ENCODE measurements at regions of chr9 and their contacts with region 1.

Region 1: GRCh38 chr9:131799177-131799823 is 59.4 kb upstream of the RAPGEF1 start:
- DNase-seq: peak; percentile 22 to 70 (median 46)
- ATAC-seq: no peak
- H3K4me3 ChIP-seq: no peak overlapping the region
- H3K4me3 Mint-ChIP-seq: no peak overlapping the region
- H3K27ac ChIP-seq: no peak overlapping the region
- H3K27ac Mint-ChIP-seq: no peak overlapping the region
- H3K4me1 ChIP-seq: no peaks in the 10 kb centered on the region
- H3K4me1 Mint-ChIP-seq: no peaks in the 10 kb centered on the region
- H3K27me3 ChIP-seq: peaks cover 0 to 4% of the 10 kb centered on the region in 2 experiments
- H3K27me3 Mint-ChIP-seq: peaks cover 64% of the 10 kb centered on the region
- CTCF ChIP-seq: no peak

Region 2: DNA sequence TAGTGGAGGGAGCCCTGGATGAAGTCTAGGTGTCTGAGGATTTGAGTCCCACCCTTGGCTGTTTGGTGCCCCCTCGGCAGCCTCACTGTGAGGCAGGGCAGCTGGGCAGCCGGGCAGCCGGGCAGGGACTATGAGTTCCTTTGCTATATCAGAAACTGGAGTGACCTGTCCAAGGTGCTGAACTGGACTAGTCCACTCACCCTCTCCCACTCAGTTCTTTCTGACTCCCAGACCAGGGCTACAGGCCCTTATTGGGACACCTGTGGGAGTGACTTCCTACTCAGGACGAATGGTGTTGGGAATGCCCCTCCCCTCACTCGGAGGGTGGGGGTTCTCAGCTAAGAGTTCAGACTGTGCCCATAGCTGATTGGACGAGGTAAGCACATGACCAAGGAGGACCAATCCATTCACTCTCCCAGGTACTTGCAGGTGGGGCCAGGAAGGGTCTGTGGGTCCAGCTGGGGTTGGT is 25.4 kb before region 1 on chr9:
- CTCF ChIA-PET with region 1: no interaction called
- POLR2A ChIA-PET with region 1: no interaction called
- intact Hi-C with region 1: loop called in 1 of 2 experiments (anchors 2 kb)
- DNase-seq: peak in 8 of 14 experiments; percentile 4 to 51 (median 13)
- ATAC-seq: no peak
- H3K4me3 ChIP-seq: no peak overlapping the region
- H3K4me3 Mint-ChIP-seq: no peak overlapping the region
- H3K27ac ChIP-seq: no peak overlapping the region
- H3K27ac Mint-ChIP-seq: no peak overlapping the region
- H3K4me1 ChIP-seq: no peaks in the 10 kb centered on the region
- H3K4me1 Mint-ChIP-seq: no peaks in the 10 kb centered on the region
- H3K27me3 ChIP-seq: peaks cover 7 to 13% of the 10 kb centered on the region in 2 experiments
- H3K27me3 Mint-ChIP-seq: peaks cover 19% of the 10 kb centered on the region
- CTCF ChIP-seq: no peak

Measured in CD4-positive, alpha-beta T cell (primary cell).